CD4-positive, alpha-beta T cell (primary cell): ENCODE measurements at regions of chr2 and their contacts with region 1.

Region 1: DNA sequence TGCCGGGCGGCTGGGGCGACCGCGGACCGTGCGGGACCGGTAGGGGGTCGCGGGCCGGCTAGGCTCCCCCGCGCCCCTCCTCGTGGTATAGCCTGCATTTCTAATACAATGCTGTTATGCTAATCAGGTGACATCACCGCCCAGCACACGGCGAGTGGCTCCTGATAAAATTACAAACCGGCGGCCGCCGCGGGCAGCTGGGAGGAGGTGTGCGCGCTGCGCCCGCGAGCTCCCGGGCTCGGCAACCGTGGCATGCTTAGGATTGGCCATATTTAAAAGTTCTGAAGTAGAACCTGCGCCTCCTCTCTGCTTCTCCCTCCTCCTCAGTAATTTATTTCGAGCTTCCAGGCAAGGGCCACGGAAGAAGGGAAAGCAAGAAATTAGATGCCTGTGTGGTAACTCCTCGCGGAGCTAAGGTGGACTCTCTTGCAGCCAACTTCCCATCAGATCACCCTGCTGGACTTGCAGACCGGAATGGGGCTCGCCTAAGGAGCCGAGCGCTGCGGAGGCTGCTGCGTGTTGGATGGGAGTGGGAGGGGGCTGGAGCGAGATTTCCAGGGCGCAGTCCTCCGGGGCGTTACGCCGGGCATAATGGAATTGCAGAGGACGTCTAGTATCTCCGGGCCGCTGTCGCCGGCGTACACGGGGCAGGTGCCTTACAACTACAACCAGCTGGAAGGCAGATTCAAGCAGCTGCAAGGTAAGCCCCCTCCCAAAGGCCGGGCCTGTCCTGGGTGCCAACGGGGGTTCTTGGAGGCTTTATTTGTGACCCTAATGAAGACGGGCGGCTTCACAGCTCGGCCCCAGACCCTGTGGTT is 102.3 kb downstream of the SPTBN1 start:
- DNase-seq: peak; percentile 35 to 88 (median 62)
- ATAC-seq: peak; percentile 66
- H3K4me3 ChIP-seq: peak overlapping the region; percentile 72
- H3K4me3 Mint-ChIP-seq: peak overlapping the region; percentile 98
- H3K27ac ChIP-seq: peak overlapping the region; percentile 75 to 89
- H3K27ac Mint-ChIP-seq: peak overlapping the region; percentile 95
- H3K4me1 ChIP-seq: peaks cover 30% of the 10 kb centered on the region
- H3K4me1 Mint-ChIP-seq: peaks cover 72% of the 10 kb centered on the region
- H3K27me3 ChIP-seq: no peaks in the 10 kb centered on the region
- H3K27me3 Mint-ChIP-seq: no peaks in the 10 kb centered on the region
- CTCF ChIP-seq: no peak

Region 2: GRCh38 chr2:54570925-54571694 is 12.7 kb after region 1 on chr2:
- CTCF ChIA-PET with region 1: interaction called, 30 read pairs
- POLR2A ChIA-PET with region 1: interaction called, 158 read pairs
- intact Hi-C with region 1: loop called (anchors 1 to 2 kb)
- DNase-seq: peak in 12 of 14 experiments; percentile 39 to 87 (median 64)
- ATAC-seq: peak; percentile 14
- H3K4me3 ChIP-seq: peak overlapping the region; percentile 31
- H3K4me3 Mint-ChIP-seq: peak overlapping the region; percentile 81
- H3K27ac ChIP-seq: peak overlapping the region; percentile 89 to 98
- H3K27ac Mint-ChIP-seq: peak overlapping the region; percentile 96
- H3K4me1 ChIP-seq: peaks cover 90% of the 10 kb centered on the region
- H3K4me1 Mint-ChIP-seq: peaks cover 95% of the 10 kb centered on the region
- H3K27me3 ChIP-seq: no peaks in the 10 kb centered on the region
- H3K27me3 Mint-ChIP-seq: no peaks in the 10 kb centered on the region
- CTCF ChIP-seq: no peak

Region 3: GRCh38 chr2:54589340-54590215 is 31.2 kb after region 1 on chr2:
- CTCF ChIA-PET with region 1: interaction called, 5 read pairs
- POLR2A ChIA-PET with region 1: interaction called, 39 read pairs
- intact Hi-C with region 1: loop called in 1 of 2 experiments (anchors 2 kb)
- DNase-seq: peak in 8 of 14 experiments; percentile 40 to 81 (median 54)
- ATAC-seq: peak; percentile 61
- H3K4me3 ChIP-seq: peak overlapping the region; percentile 27
- H3K4me3 Mint-ChIP-seq: peak overlapping the region; percentile 74
- H3K27ac ChIP-seq: peak overlapping the region; percentile 74 to 80
- H3K27ac Mint-ChIP-seq: peak overlapping the region; percentile 96
- H3K4me1 ChIP-seq: peaks cover 61% of the 10 kb centered on the region
- H3K4me1 Mint-ChIP-seq: peaks cover 98% of the 10 kb centered on the region
- H3K27me3 ChIP-seq: no peaks in the 10 kb centered on the region
- H3K27me3 Mint-ChIP-seq: no peaks in the 10 kb centered on the region
- CTCF ChIP-seq: no peak

Region 4: DNA sequence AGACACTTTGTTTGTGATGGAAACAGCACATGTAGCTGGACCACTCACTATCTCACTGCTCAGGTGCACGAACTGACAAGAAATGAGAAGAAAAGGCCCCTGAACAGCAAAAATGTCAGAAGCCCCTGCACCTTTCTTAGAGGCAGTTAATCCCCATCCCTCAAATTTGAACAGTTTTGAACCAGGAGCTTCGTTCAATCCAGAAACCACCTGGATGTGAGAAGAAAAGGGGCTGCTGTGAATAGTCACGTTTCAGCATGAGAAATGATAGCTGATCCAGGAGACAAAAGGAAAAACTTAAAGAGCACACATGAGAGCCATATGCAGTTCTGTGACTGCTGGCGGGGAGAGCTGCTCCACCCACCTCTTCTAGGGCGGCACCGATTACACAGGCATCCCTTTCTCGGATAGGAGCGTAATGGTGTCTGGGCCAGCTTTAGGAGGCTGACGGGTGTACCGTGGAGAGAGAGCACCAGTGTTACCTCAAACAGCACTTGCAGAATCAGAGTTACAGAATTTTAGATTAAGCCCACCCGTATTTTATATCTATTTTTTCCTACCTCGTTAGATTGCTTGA is 48.1 kb after region 1 on chr2:
- CTCF ChIA-PET with region 1: interaction called, 3 read pairs
- POLR2A ChIA-PET with region 1: interaction called, 40 read pairs
- intact Hi-C with region 1: loop called in 1 of 2 experiments (anchors 2 kb)
- DNase-seq: peak in 13 of 14 experiments; percentile 21 to 69 (median 44)
- ATAC-seq: peak; percentile 97
- H3K4me3 ChIP-seq: no peak overlapping the region
- H3K4me3 Mint-ChIP-seq: peak overlapping the region; percentile 77
- H3K27ac ChIP-seq: no peak overlapping the region
- H3K27ac Mint-ChIP-seq: peak overlapping the region; percentile 96
- H3K4me1 ChIP-seq: peaks cover 63% of the 10 kb centered on the region
- H3K4me1 Mint-ChIP-seq: peaks cover 90% of the 10 kb centered on the region
- H3K27me3 ChIP-seq: no peaks in the 10 kb centered on the region
- H3K27me3 Mint-ChIP-seq: no peaks in the 10 kb centered on the region
- CTCF ChIP-seq: no peak

Region 5: GRCh38 chr2:54634564-54635511 is 76.4 kb after region 1 on chr2:
- CTCF ChIA-PET with region 1: interaction called, 3 read pairs
- POLR2A ChIA-PET with region 1: interaction called, 19 read pairs
- intact Hi-C with region 1: loop called in 1 of 2 experiments (anchors 2 kb)
- DNase-seq: peak in 3 of 14 experiments; percentile 36 to 49 (median 42)
- ATAC-seq: peak; percentile 77
- H3K4me3 ChIP-seq: no peak overlapping the region
- H3K4me3 Mint-ChIP-seq: peak overlapping the region; percentile 44
- H3K27ac ChIP-seq: peak overlapping the region in 1 of 2 donors; percentile 7
- H3K27ac Mint-ChIP-seq: peak overlapping the region; percentile 49
- H3K4me1 ChIP-seq: peaks cover 8% of the 10 kb centered on the region
- H3K4me1 Mint-ChIP-seq: peaks cover 42% of the 10 kb centered on the region
- H3K27me3 ChIP-seq: no peaks in the 10 kb centered on the region
- H3K27me3 Mint-ChIP-seq: no peaks in the 10 kb centered on the region
- CTCF ChIP-seq: no peak